ENCODE measurements at regions of chr20 and their contacts with region 1.

Region 1: GRCh38 chr20:58870239-58871014 is 17.9 kb downstream of the GNAS start:
- DNase-seq: peak; percentile 58 to 75
- ATAC-seq: peak; percentile 71 to 92 (median 82)
- H3K4me3 ChIP-seq: no peak overlapping the region
- H3K27ac ChIP-seq: no peak overlapping the region
- H3K4me1 ChIP-seq: peaks cover 0 to 6% (median 0%) of the 10 kb centered on the region in 9 donors
- H3K27me3 ChIP-seq: no peaks in the 10 kb centered on the region
- CTCF ChIP-seq: peak; percentile 71 to 95 (median 90)

Region 2: DNA sequence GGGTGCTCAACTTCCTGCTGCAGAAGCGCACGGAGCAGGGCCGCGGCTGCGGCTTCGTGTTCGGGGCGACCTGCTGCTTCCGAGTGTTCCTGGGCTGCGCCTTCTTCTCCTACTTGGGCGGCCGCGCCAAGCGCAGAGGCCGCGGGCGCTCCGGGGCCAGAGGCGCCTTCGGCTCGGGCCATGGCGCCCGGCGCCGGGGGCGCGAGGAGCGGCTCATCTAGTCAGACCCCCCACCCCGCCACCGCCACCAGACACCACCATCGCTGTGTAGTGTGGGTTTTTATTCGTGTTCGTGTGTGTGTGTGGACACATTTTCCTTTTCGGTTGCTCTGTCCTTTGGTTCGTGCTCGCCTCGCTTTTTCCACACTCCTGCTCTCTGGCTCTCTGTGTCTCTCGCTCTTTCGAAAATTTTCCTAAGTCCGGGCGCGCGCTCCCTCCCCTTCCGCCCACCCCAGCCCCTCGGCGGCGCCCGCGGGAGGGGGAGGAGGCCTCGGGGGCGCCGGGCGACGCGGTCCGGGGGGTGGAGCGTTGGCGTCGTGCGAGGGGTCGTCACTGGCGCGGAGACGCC is 20.2 kb after region 1 on chr20:
- intact Hi-C with region 1: no loop called
- DNase-seq: peak; percentile 78 to 83
- ATAC-seq: peak; percentile 66 to 83 (median 72)
- H3K4me3 ChIP-seq: peak overlapping the region; percentile 46 to 92 (median 82)
- H3K27ac ChIP-seq: peak overlapping the region; percentile 90 to 100 (median 98)
- H3K4me1 ChIP-seq: peaks cover 8 to 36% (median 32%) of the 10 kb centered on the region in 9 donors
- H3K27me3 ChIP-seq: no peaks in the 10 kb centered on the region
- CTCF ChIP-seq: no peak

Region 3: DNA sequence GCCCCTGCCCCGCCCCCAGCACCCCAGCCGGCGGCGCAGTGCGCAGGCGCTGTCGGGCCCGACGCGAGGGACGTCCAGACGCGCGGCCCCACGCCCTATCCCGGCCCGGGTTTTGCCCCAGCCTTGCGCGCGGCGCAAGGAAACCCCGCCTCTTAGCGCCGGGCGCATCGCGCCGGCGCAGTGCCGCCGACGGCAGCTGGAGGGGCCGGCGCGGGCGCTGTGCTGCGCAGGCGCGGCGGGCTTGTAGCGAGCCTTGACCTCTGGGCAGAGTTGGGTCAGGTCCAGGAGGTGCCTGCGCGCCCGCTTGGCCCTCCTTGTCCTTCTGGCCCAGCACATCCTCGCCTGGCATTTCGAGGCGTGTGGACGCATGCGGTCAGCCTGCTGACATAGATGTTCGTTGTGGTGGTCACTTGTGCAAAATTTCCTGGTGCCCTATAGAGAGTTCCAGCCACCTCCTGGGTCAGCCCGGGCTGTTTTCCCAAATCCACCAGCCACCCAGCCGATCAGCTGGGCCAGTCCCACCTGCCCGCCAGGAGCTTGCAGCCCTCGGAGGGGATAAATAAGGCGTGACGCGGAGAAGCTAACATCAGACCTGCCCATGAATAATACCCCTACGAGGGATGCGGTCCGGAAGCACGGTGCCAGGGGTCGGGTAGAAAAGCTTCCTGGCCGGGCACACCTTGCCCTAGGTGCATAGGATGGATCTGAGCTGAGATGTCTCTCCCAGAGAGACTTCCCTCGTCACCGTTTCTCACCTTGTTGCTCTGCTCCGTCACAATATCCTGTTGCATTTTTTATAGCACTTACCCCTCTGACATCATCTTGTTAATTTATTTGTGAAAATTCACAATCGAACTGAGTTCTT is 172.6 kb after region 1 on chr20:
- intact Hi-C with region 1: loop called in 2 of 10 experiments (anchors 5 to 10 kb)
- DNase-seq: peak; percentile 91 to 96
- ATAC-seq: peak; percentile 98 to 99 (median 99)
- H3K4me3 ChIP-seq: peak overlapping the region; percentile 64 to 93 (median 86)
- H3K27ac ChIP-seq: peak overlapping the region; percentile 21 to 93 (median 89)
- H3K4me1 ChIP-seq: peaks cover 4 to 42% (median 37%) of the 10 kb centered on the region in 9 donors
- H3K27me3 ChIP-seq: no peaks in the 10 kb centered on the region
- CTCF ChIP-seq: peak in 1 of 9 donors; percentile 35

Region 4: GRCh38 chr20:59082077-59082740 is 211.8 kb after region 1 on chr20:
- intact Hi-C with region 1: loop called in 5 of 10 experiments (anchors 2 to 10 kb)
- DNase-seq: no peak
- ATAC-seq: no peak
- H3K4me3 ChIP-seq: no peak overlapping the region
- H3K27ac ChIP-seq: no peak overlapping the region
- H3K4me1 ChIP-seq: peaks cover 0 to 12% (median 0%) of the 10 kb centered on the region in 9 donors
- H3K27me3 ChIP-seq: peaks cover 0 to 21% (median 7%) of the 10 kb centered on the region in 7 donors
- CTCF ChIP-seq: peak in 7 of 9 donors; percentile 16 to 44 (median 41)

Region 5: DNA sequence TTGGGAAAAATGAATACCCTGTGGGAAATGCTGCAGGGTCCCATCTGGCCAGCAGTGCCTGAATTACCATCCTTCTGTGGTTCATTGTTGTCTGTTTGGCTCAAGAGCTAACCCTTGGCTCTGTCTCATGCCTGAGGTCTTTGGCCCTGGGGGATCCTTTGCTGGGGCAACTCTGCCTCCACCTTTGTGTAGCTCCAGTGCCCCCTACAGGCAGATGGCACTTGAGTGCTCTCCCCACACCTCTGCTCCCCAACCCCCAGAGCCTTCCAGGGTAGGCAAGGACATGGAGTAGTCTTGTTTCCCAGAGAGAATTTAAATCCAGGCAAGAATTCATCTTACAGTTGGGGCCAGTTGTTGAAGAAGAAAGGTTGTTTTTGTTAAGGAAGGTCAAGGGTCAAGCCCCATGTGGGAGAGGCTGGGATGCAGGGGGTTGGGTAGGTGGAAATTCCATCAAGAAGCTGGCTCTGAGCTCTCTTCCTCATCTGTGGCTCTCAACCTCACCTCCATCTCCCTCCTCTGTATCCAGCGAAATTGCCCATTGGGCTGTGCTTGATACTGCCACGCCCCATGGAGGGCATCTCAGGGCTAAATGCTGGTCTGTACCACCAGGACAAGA is 337.4 kb after region 1 on chr20:
- intact Hi-C with region 1: loop called in 6 of 10 experiments (anchors 5 kb)
- DNase-seq: peak; percentile 48 to 61
- ATAC-seq: peak; percentile 82 to 88 (median 83)
- H3K4me3 ChIP-seq: no peak overlapping the region
- H3K27ac ChIP-seq: no peak overlapping the region
- H3K4me1 ChIP-seq: peaks cover 0 to 36% (median 6%) of the 10 kb centered on the region in 9 donors
- H3K27me3 ChIP-seq: peaks cover 0 to 40% (median 0%) of the 10 kb centered on the region in 7 donors
- CTCF ChIP-seq: peak; percentile 26 to 74 (median 64)

Region 6: GRCh38 chr20:59403261-59403961 is 533.0 kb after region 1 on chr20:
- intact Hi-C with region 1: loop called in 9 of 10 experiments (anchors 5 to 10 kb)
- DNase-seq: peak; percentile 21 to 52
- ATAC-seq: peak; percentile 60 to 78 (median 68)
- H3K4me3 ChIP-seq: peak overlapping the region in 3 of 10 donors; percentile 9 to 17 (median 10)
- H3K27ac ChIP-seq: no peak overlapping the region
- H3K4me1 ChIP-seq: peaks cover 0 to 19% (median 10%) of the 10 kb centered on the region in 9 donors
- H3K27me3 ChIP-seq: peaks cover 12 to 97% (median 89%) of the 10 kb centered on the region in 7 donors
- CTCF ChIP-seq: peak; percentile 80 to 98 (median 95)

Region 7: GRCh38 chr20:59495894-59496510 is 625.6 kb after region 1 on chr20:
- intact Hi-C with region 1: loop called in 8 of 10 experiments (anchors 5 to 10 kb)
- DNase-seq: peak; percentile 54 to 66
- ATAC-seq: peak; percentile 27 to 62 (median 40)
- H3K4me3 ChIP-seq: no peak overlapping the region
- H3K27ac ChIP-seq: no peak overlapping the region
- H3K4me1 ChIP-seq: no peaks in the 10 kb centered on the region
- H3K27me3 ChIP-seq: peaks cover 5 to 60% (median 38%) of the 10 kb centered on the region in 7 donors
- CTCF ChIP-seq: peak; percentile 65 to 93 (median 88)